HepG2 (cell line): ENCODE measurements at regions of chr7 and their contacts with region 1.

Region 1: DNA sequence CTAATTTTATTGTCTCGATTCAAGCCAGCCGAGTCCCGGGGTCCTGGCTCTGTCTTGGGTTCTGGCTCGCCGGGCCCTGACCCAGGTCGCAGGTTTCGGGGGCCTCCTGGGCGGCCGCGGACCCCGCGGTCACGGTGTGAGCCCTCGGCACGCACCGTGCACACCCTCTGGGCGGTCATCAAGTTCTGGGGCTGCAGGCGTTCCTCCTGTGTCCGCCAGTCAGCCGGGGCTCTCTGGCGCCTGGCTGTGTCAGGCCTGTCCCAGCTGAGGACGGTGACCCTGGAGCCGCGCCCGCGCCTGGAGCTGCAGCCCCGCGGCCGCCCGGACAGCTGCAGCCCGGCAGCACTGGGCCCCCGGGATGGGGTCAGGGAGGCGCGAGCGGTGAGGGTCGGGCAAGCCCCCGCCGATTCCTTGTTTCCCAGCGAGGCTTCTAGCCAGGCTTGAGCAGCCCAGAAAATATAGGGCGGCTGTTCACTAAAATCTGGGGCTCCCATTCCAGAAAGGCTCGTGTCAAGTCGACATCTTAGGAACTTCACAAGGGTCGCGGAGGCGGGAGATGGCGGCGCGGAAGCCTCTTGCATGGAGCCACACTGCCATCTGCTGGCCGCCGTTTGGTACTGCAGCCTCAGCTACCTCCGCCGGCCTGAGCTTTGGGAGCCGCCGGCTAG is 4.2 kb upstream of the HOXA7 start:
- DNase-seq: peak; percentile 62
- ATAC-seq: peak; percentile 91
- H3K4me3 ChIP-seq: peak overlapping the region; percentile 51 to 68 (median 66)
- H3K27ac ChIP-seq: no peak overlapping the region
- H3K4me1 ChIP-seq: peaks cover 8% of the 10 kb centered on the region; the same call in 1 of the 2 replicates
- H3K27me3 ChIP-seq: peaks cover 2 to 44% of the 10 kb centered on the region in 2 experiments
- CTCF ChIP-seq: peak; percentile 97
- EP300 ChIP-seq: no peak
- POLR2A ChIP-seq: no peak
- RAD21 ChIP-seq: peak; percentile 97

Region 2: GRCh38 chr7:26078437-26079336 is 1082.0 kb before region 1 on chr7:
- CTCF ChIA-PET with region 1: no interaction called
- POLR2A ChIA-PET with region 1: no interaction called
- in situ Hi-C with region 1: loop called (anchors 25 kb)
- intact Hi-C with region 1: no loop called
- DNase-seq: peak; percentile 57
- ATAC-seq: peak; percentile 98
- H3K4me3 ChIP-seq: peak overlapping the region in 1 of 3 experiments; percentile 30; a peak in 1 of 6 replicates
- H3K27ac ChIP-seq: no peak overlapping the region
- H3K4me1 ChIP-seq: peaks cover 28% of the 10 kb centered on the region
- H3K27me3 ChIP-seq: no peaks in the 10 kb centered on the region
- CTCF ChIP-seq: peak; percentile 84
- EP300 ChIP-seq: no peak
- POLR2A ChIP-seq: no peak
- RAD21 ChIP-seq: peak; percentile 65; the same call in 1 of the 2 replicates

Region 3: DNA sequence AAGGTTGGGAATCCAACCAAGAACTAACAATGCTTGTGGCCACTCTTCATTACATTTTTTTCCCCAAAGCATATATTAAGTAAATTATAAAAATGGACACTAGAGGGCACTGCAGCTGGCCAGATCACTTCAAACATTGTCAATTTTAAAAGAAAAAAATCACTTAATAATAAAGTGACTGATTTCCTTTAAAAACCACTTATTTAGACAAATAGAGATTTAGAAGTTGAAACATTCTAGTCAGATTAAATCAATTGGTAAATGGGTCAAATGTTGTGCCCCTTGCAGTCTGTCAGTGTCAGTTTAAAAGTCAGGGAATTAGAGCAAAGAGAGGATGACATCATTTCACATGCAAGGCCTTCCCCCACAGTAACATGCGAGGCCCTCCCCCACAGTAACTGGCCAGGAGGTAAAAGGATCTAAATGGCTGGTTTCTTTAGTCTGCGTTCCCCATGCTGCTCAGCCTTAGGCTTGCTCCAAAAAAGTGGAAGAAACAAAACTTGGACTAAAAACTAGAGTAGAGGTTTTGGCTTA is 474.2 kb before region 1 on chr7:
- CTCF ChIA-PET with region 1: interaction called, 6 read pairs
- POLR2A ChIA-PET with region 1: no interaction called
- in situ Hi-C with region 1: no loop called
- intact Hi-C with region 1: loop called (anchors 5 kb)
- DNase-seq: peak; percentile 68
- ATAC-seq: peak; percentile 68
- H3K4me3 ChIP-seq: no peak overlapping the region
- H3K27ac ChIP-seq: peak overlapping the region; percentile 33
- H3K4me1 ChIP-seq: peaks cover 48% of the 10 kb centered on the region
- H3K27me3 ChIP-seq: no peaks in the 10 kb centered on the region
- CTCF ChIP-seq: peak; percentile 58
- EP300 ChIP-seq: no peak
- POLR2A ChIP-seq: no peak
- RAD21 ChIP-seq: no peak